ENCODE measurements at regions of chr16 and their contacts with region 1.

Region 1: DNA sequence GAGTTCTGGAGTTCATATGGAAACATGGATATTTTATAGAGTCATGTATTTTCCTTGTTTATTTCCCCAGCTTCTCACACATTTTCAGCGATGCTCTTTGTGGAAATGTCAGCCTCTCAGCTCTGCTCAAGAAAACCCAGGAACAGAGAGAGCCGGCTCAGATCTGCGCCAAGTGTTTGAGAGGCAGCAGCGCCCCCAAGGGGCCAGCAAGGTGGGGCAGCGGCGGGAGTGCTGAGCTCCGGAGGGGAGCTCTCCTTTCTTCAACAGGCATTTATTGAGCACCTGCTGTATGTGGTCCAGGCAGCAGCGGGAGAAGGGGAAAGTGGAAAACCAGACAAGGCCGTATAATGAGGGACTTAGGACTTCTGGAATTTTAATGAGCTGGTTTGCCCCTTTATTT is 421.1 kb upstream of the C16orf82 start:
- DNase-seq: peak; percentile 60
- H3K4me3 Mint-ChIP-seq: peak overlapping the region; percentile 16
- H3K27ac Mint-ChIP-seq: no peak overlapping the region
- H3K4me1 Mint-ChIP-seq: peaks cover 38% of the 10 kb centered on the region
- H3K27me3 Mint-ChIP-seq: peaks cover 9% of the 10 kb centered on the region

Region 2: DNA sequence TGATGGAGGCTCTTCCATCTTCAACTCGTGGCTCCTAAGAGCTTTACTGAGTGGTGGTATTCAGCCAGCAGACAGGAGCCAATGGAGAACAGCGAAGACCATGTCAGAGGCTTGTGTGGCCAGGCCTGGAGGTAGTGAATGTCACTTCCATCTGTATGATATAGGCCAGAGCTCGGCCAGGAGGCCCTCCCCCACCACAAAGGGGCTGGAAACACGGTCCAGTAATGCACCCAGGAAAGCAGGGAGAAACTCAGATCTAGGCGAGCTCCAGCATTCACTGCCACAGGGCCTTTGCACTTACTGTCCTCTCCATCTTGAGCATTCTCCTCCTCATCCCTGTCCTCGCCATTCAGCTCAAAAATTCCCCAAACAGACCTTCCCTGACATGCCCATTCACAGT is 134.2 kb before region 1 on chr16:
- CTCF ChIA-PET with region 1: no interaction called
- POLR2A ChIA-PET with region 1: no interaction called
- DNase-seq: no peak
- H3K4me3 Mint-ChIP-seq: no peak overlapping the region
- H3K27ac Mint-ChIP-seq: no peak overlapping the region
- H3K4me1 Mint-ChIP-seq: no peaks in the 10 kb centered on the region
- H3K27me3 Mint-ChIP-seq: peaks cover 18% of the 10 kb centered on the region

Region 3: GRCh38 chr16:26627958-26628357 is 17.7 kb before region 1 on chr16:
- CTCF ChIA-PET with region 1: interaction called, 14 read pairs
- POLR2A ChIA-PET with region 1: no interaction called
- DNase-seq: no peak
- H3K4me3 Mint-ChIP-seq: no peak overlapping the region
- H3K27ac Mint-ChIP-seq: no peak overlapping the region
- H3K4me1 Mint-ChIP-seq: peaks cover 5% of the 10 kb centered on the region
- H3K27me3 Mint-ChIP-seq: peaks cover 10% of the 10 kb centered on the region

Region 4: GRCh38 chr16:26787924-26788323 is 142.3 kb after region 1 on chr16:
- CTCF ChIA-PET with region 1: no interaction called
- POLR2A ChIA-PET with region 1: no interaction called
- DNase-seq: no peak
- H3K4me3 Mint-ChIP-seq: no peak overlapping the region
- H3K27ac Mint-ChIP-seq: no peak overlapping the region
- H3K4me1 Mint-ChIP-seq: no peaks in the 10 kb centered on the region
- H3K27me3 Mint-ChIP-seq: peaks cover 8% of the 10 kb centered on the region